ENCODE measurements at regions of chr19 and their contacts with region 1.

Region 1: DNA sequence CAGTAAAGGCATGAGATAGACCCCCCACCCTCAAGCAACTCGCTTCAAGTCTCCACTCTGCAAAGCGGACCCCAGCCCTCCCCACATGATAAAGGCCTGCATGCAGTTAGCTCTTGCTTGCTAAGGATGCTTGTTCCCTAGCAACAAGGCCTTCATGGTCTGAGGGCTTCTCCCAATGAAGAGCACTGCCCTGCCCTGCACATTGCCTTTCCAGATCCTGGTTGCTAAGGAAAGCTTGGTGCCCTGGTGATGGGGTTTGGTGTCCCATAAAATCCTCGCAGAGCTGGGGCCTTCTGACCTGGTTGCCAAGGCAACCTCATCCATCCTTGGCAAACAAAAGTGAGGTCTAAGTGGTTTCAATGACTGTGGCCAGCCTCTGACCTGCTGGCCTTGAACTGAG is 6.0 kb downstream of the DBP start:
- DNase-seq: no peak
- ATAC-seq: no peak
- H3K4me3 ChIP-seq: no peak overlapping the region
- H3K27ac ChIP-seq: no peak overlapping the region
- H3K4me1 ChIP-seq: peaks cover 39% of the 10 kb centered on the region
- H3K27me3 ChIP-seq: no peaks in the 10 kb centered on the region
- CTCF ChIP-seq: no peak
- POLR2A ChIP-seq: no peak
- RAD21 ChIP-seq: no peak

Region 2: GRCh38 chr19:48674921-48675824 is 43.9 kb after region 1 on chr19:
- CTCF ChIA-PET with region 1: no interaction called
- POLR2A ChIA-PET with region 1: no interaction called
- dilution Hi-C with region 1: no loop called
- in situ Hi-C with region 1: no loop called
- intact Hi-C with region 1: no loop called
- DNase-seq: peak; percentile 72
- ATAC-seq: peak; percentile 99
- H3K4me3 ChIP-seq: no peak overlapping the region
- H3K27ac ChIP-seq: no peak overlapping the region
- H3K4me1 ChIP-seq: no peaks in the 10 kb centered on the region
- H3K27me3 ChIP-seq: peaks cover 9% of the 10 kb centered on the region; the same call in 1 of the 2 replicates
- CTCF ChIP-seq: peak; percentile 83
- POLR2A ChIP-seq: no peak
- RAD21 ChIP-seq: peak; percentile 76

Region 3: GRCh38 chr19:48705431-48705830 is 74.2 kb after region 1 on chr19:
- CTCF ChIA-PET with region 1: no interaction called
- POLR2A ChIA-PET with region 1: no interaction called
- dilution Hi-C with region 1: no loop called
- in situ Hi-C with region 1: no loop called
- intact Hi-C with region 1: no loop called
- DNase-seq: no peak
- ATAC-seq: no peak; the same call in 1 of the 2 replicates
- H3K4me3 ChIP-seq: no peak overlapping the region
- H3K27ac ChIP-seq: no peak overlapping the region
- H3K4me1 ChIP-seq: no peaks in the 10 kb centered on the region
- H3K27me3 ChIP-seq: no peaks in the 10 kb centered on the region
- CTCF ChIP-seq: no peak
- POLR2A ChIP-seq: no peak
- RAD21 ChIP-seq: no peak

Region 4: GRCh38 chr19:48842789-48843162 is 211.6 kb after region 1 on chr19:
- CTCF ChIA-PET with region 1: interaction called, 9 read pairs
- POLR2A ChIA-PET with region 1: interaction called, 30 read pairs
- dilution Hi-C with region 1: no loop called
- in situ Hi-C with region 1: no loop called
- intact Hi-C with region 1: no loop called
- DNase-seq: peak; percentile 48
- ATAC-seq: peak; percentile 79
- H3K4me3 ChIP-seq: no peak overlapping the region
- H3K27ac ChIP-seq: no peak overlapping the region
- H3K4me1 ChIP-seq: no peaks in the 10 kb centered on the region
- H3K27me3 ChIP-seq: no peaks in the 10 kb centered on the region
- CTCF ChIP-seq: peak; percentile 69
- POLR2A ChIP-seq: no peak
- RAD21 ChIP-seq: peak; percentile 64

Measured in IMR-90 (cell line).